Dendritic cell treated with granulocyte-macrophage colony-stimulating factor and Interleukin-4, amounts not matched to agents 40 ng/mL and 50 ng/mL, for 4 days (primary cell): ENCODE measurements at regions of chr4 and their contacts with region 1.

Region 1: DNA sequence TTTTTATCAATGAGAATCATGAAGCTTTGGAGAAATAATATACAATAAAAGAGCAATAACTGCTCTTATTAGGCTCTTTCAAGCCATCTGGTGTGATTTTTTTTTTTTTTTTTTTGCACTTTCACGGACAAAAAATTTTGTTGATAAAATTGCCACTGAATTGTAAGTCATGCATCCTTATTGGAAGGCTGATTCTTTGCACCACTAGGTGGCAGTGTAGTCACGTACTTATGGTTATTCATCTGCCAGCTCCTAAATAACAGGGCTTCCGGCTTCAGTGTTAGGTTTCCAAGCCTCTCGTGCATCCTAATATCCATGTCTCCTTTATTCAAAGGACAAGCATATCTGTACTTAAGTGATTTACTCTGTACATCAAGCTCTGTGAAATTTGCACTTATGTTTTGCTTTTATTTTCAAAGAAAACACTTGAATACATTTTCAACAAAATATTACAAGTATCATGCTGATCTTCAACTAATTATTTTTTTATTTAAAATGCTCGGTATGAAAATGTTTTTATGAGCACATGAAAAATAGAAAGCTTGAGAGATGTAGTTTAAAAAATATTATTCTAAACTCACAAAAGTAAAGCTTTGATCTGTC is 1578.3 kb upstream of the TENM3 start:
- H3K4me3 Mint-ChIP-seq: no peak overlapping the region
- H3K27ac Mint-ChIP-seq: no peak overlapping the region
- H3K4me1 Mint-ChIP-seq: no peaks in the 10 kb centered on the region
- H3K27me3 Mint-ChIP-seq: no peaks in the 10 kb centered on the region

Region 2: GRCh38 chr4:180650273-180650672 is 14.6 kb before region 1 on chr4:
- intact Hi-C with region 1: no loop called
- H3K4me3 Mint-ChIP-seq: no peak overlapping the region
- H3K27ac Mint-ChIP-seq: no peak overlapping the region
- H3K4me1 Mint-ChIP-seq: no peaks in the 10 kb centered on the region
- H3K27me3 Mint-ChIP-seq: no peaks in the 10 kb centered on the region

Region 3: GRCh38 chr4:180832073-180832472 is 167.2 kb after region 1 on chr4:
- intact Hi-C with region 1: loop called (anchors 10 kb)
- H3K4me3 Mint-ChIP-seq: no peak overlapping the region
- H3K27ac Mint-ChIP-seq: no peak overlapping the region
- H3K4me1 Mint-ChIP-seq: peaks cover 4% of the 10 kb centered on the region
- H3K27me3 Mint-ChIP-seq: no peaks in the 10 kb centered on the region

Region 4: GRCh38 chr4:181528570-181529184 is 863.8 kb after region 1 on chr4:
- intact Hi-C with region 1: loop called (anchors 2 kb)
- H3K4me3 Mint-ChIP-seq: no peak overlapping the region
- H3K27ac Mint-ChIP-seq: no peak overlapping the region
- H3K4me1 Mint-ChIP-seq: no peaks in the 10 kb centered on the region
- H3K27me3 Mint-ChIP-seq: no peaks in the 10 kb centered on the region